ENCODE measurements at regions of chr19 and their contacts with region 1.

Region 1: GRCh38 chr19:56066152-56067023 is 54.7 kb downstream of the ZNF787 start:
- DNase-seq: peak; percentile 61
- ATAC-seq: peak; percentile 69
- H3K4me3 Mint-ChIP-seq: peak overlapping the region; percentile 53
- H3K27ac Mint-ChIP-seq: no peak overlapping the region
- H3K4me1 Mint-ChIP-seq: peaks cover 12% of the 10 kb centered on the region
- H3K27me3 Mint-ChIP-seq: peaks cover 28% of the 10 kb centered on the region
- CTCF ChIP-seq: peak; percentile 34

Region 2: DNA sequence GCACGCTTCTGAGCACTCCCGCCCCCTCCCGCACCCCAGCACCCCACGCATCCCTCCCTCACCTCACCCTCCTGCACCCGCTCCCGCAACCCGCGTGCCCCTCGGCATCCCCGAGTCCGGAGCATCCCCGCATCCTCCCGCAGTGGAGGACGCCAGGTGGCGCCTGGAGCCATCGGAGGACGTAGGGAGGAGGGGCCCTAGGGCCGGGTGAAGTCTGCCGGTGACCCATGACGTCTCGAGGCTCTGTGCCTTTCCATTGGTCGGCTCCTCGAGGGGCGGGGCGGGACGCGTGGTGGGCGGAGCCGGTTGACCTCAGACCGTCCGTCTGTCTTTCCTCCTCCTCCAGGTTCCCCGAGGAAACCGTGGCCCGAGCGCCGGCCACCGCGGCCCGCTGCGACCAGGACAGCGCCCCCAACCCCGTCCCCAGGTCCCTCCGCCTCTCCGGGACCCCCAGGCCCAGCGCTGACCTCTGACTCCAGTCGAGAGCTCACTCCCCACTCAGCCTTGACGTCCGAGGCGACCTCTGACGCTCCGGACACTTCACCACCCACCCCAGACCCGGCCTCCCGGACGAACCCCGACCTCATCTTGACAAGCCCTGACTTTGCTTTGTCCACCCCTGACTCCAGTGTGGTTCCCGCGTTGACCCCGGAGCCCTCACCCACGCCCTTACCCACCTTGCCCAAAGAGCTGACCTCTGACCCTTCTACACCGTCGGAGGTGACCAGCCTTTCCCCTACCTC is 549.3 kb before region 1 on chr19:
- CTCF ChIA-PET with region 1: no interaction called
- POLR2A ChIA-PET with region 1: no interaction called
- intact Hi-C with region 1: loop called (anchors 10 kb)
- DNase-seq: peak; percentile 92
- ATAC-seq: peak; percentile 100
- H3K4me3 Mint-ChIP-seq: peak overlapping the region; percentile 76
- H3K27ac Mint-ChIP-seq: peak overlapping the region; percentile 87
- H3K4me1 Mint-ChIP-seq: peaks cover 3% of the 10 kb centered on the region
- H3K27me3 Mint-ChIP-seq: peaks cover 10% of the 10 kb centered on the region
- CTCF ChIP-seq: no peak

Region 3: GRCh38 chr19:56133858-56134653 is 67.7 kb after region 1 on chr19:
- CTCF ChIA-PET with region 1: no interaction called
- POLR2A ChIA-PET with region 1: no interaction called
- intact Hi-C with region 1: no loop called
- DNase-seq: no peak
- ATAC-seq: peak; percentile 100
- H3K4me3 Mint-ChIP-seq: peak overlapping the region; percentile 53
- H3K27ac Mint-ChIP-seq: peak overlapping the region; percentile 76
- H3K4me1 Mint-ChIP-seq: peaks cover 9% of the 10 kb centered on the region
- H3K27me3 Mint-ChIP-seq: no peaks in the 10 kb centered on the region
- CTCF ChIP-seq: no peak

Region 4: GRCh38 chr19:56170261-56170660 is 103.9 kb after region 1 on chr19:
- CTCF ChIA-PET with region 1: interaction called, 11 read pairs
- POLR2A ChIA-PET with region 1: no interaction called
- intact Hi-C with region 1: loop called (anchors 1 kb)
- DNase-seq: no peak
- ATAC-seq: no peak
- H3K4me3 Mint-ChIP-seq: no peak overlapping the region
- H3K27ac Mint-ChIP-seq: no peak overlapping the region
- H3K4me1 Mint-ChIP-seq: peaks cover 2% of the 10 kb centered on the region
- H3K27me3 Mint-ChIP-seq: peaks cover 3% of the 10 kb centered on the region
- CTCF ChIP-seq: no peak

Region 5: DNA sequence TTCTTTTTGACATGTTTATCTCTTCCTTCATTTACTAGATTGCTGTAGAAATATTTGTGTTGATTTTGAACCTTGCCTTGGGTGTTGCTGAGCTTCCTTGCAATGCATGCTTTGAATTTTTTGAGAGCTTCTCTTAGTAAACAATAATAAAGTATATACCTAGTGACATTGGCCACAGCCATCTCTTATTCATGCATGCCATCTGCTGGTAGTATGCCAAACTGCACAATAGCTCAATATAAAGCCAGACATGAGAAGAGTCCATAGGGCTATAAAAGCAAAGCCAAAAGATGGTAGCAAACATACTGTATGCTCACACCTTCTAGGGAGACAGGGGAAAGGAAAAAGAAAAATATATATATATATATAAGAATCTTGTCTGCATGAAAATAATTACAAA is 267.1 kb after region 1 on chr19:
- CTCF ChIA-PET with region 1: interaction called, 32 read pairs
- POLR2A ChIA-PET with region 1: no interaction called
- intact Hi-C with region 1: loop called (anchors 2 kb)
- DNase-seq: no peak
- ATAC-seq: peak; percentile 73
- H3K4me3 Mint-ChIP-seq: no peak overlapping the region
- H3K27ac Mint-ChIP-seq: no peak overlapping the region
- H3K4me1 Mint-ChIP-seq: no peaks in the 10 kb centered on the region
- H3K27me3 Mint-ChIP-seq: peaks cover 3% of the 10 kb centered on the region
- CTCF ChIP-seq: peak; percentile 36

Region 6: GRCh38 chr19:56350416-56351045 is 284.1 kb after region 1 on chr19:
- CTCF ChIA-PET with region 1: interaction called, 13 read pairs
- POLR2A ChIA-PET with region 1: no interaction called
- intact Hi-C with region 1: loop called (anchors 1 kb)
- DNase-seq: no peak
- ATAC-seq: no peak
- H3K4me3 Mint-ChIP-seq: no peak overlapping the region
- H3K27ac Mint-ChIP-seq: no peak overlapping the region
- H3K4me1 Mint-ChIP-seq: no peaks in the 10 kb centered on the region
- H3K27me3 Mint-ChIP-seq: no peaks in the 10 kb centered on the region
- CTCF ChIP-seq: no peak

Measured in activated B cell treated with CpG ODN at 0.5 μM for 24 hours (primary cell).